ENCODE measurements at regions of chr12 and their contacts with region 1.

Region 1: GRCh38 chr12:53251477-53252348 is 16.4 kb upstream of the ESPL1 start:
- DNase-seq: peak; percentile 78 to 87
- H3K4me3 ChIP-seq: peak overlapping the region; percentile 92 to 94
- H3K27ac ChIP-seq: peak overlapping the region; percentile 84 to 93
- H3K4me1 ChIP-seq: peaks cover 0 to 32% (median 27%) of the 10 kb centered on the region in 4 donors
- H3K27me3 ChIP-seq: no peaks in the 10 kb centered on the region
- CTCF ChIP-seq: peak in 1 of 2 experiments; percentile 34

Region 2: GRCh38 chr12:53213348-53213747 is 38.4 kb before region 1 on chr12:
- intact Hi-C with region 1: loop called (anchors 2 kb)
- DNase-seq: peak; percentile 79 to 87
- H3K4me3 ChIP-seq: no peak overlapping the region
- H3K27ac ChIP-seq: no peak overlapping the region
- H3K4me1 ChIP-seq: peaks cover 4 to 44% (median 35%) of the 10 kb centered on the region in 4 donors
- H3K27me3 ChIP-seq: no peaks in the 10 kb centered on the region
- CTCF ChIP-seq: peak; percentile 89 to 94

Region 3: DNA sequence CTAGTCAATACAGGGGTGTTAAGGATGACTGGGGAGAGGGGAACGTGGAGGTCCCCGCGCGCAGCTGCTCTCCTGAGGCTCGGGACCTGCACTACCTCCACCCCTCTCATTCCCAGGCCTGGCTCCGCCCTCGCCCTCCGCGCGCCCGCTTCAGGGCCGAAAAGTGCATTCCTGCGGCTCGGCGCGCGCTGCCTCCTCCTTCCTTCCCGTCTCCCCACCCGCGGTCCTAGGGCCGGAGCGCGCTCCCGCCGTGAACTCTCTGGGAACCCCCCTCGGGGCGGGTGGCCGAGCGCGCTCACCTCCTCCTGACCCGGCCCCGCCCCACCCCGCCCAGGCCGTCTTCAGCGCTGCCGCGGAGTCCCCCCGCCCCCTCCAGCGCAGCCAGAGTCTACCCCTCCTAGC is 30.9 kb before region 1 on chr12:
- intact Hi-C with region 1: loop called (anchors 2 kb)
- DNase-seq: peak; percentile 88 to 96
- H3K4me3 ChIP-seq: peak overlapping the region; percentile 66 to 74
- H3K27ac ChIP-seq: peak overlapping the region; percentile 98 to 99
- H3K4me1 ChIP-seq: peaks cover 17 to 74% (median 63%) of the 10 kb centered on the region in 4 donors
- H3K27me3 ChIP-seq: no peaks in the 10 kb centered on the region
- CTCF ChIP-seq: no peak

Region 4: GRCh38 chr12:54444206-54444605 is 1192.5 kb after region 1 on chr12:
- intact Hi-C with region 1: no loop called
- DNase-seq: no peak
- H3K4me3 ChIP-seq: no peak overlapping the region
- H3K27ac ChIP-seq: no peak overlapping the region
- H3K4me1 ChIP-seq: peaks cover 0 to 4% (median 4%) of the 10 kb centered on the region in 4 donors
- H3K27me3 ChIP-seq: no peaks in the 10 kb centered on the region
- CTCF ChIP-seq: no peak

Measured in tibial artery (tissue), 4 donors.